ENCODE measurements at regions of chr2 and their contacts with region 1.

Region 1: DNA sequence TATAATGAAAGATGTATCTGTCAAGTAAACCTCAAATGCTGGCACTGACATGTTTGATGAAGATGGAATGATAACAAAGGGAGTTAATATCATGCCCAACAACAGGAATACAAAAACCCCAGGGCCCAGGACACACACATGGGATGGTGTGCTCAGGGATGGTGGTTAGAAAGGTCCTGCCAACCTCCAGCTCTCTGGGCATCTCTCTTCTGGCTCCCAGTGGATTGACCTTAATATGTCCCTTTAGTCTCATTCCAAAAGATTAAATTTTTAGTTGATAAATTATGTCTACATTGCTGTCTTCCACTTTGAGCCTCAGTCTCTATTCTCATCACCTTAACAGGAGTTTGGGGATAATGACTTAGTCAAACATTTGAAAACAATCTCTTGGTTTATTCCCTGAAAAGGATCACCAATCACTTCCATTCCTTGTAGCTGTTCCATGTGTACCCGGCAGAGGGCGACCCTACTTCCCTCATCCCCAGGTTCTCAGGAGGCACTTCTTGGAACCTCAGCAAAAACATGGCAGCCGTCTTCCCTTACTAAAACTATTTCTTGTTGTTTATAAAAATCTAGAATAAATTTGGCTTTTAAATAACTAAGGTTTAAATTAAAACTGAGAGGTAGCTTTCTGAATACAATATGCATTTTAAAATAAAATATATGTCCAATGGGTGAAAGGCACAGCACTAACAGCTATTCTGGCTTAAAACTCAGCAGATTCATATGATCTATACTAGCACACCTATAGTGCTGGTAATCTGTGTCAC is 29.6 kb downstream of the MCEE start:
- DNase-seq: peak; percentile 68 to 74
- H3K4me3 ChIP-seq: no peak overlapping the region
- H3K4me3 Mint-ChIP-seq: no peak overlapping the region
- H3K27ac Mint-ChIP-seq: no peak overlapping the region
- H3K4me1 ChIP-seq: peaks cover 4% of the 10 kb centered on the region
- H3K4me1 Mint-ChIP-seq: peaks cover 6% of the 10 kb centered on the region
- H3K27me3 ChIP-seq: no peaks in the 10 kb centered on the region
- H3K27me3 Mint-ChIP-seq: peaks cover 6% of the 10 kb centered on the region
- CTCF ChIP-seq: peak; percentile 84

Region 2: GRCh38 chr2:71130113-71130904 is 29.9 kb after region 1 on chr2 and contains the starts of genes MCEE and MPHOSPH10:
- CTCF ChIA-PET with region 1: interaction called, 7 read pairs
- POLR2A ChIA-PET with region 1: interaction called, 3 read pairs
- intact Hi-C with region 1: loop called (anchors 1 kb)
- DNase-seq: peak; percentile 93
- H3K4me3 ChIP-seq: peak within 1 kb of the TSS; percentile 73
- H3K4me3 Mint-ChIP-seq: no peak within 1 kb of the TSS
- H3K27ac Mint-ChIP-seq: no peak within 1 kb of the TSS
- H3K4me1 ChIP-seq: 0 out of 2 replicates have a peak, but pooled peaks cover 4% of the 10 kb centered on the region
- H3K4me1 Mint-ChIP-seq: no peaks in the 10 kb centered on the region
- H3K27me3 ChIP-seq: no peaks in the 10 kb centered on the region
- H3K27me3 Mint-ChIP-seq: no peaks in the 10 kb centered on the region
- CTCF ChIP-seq: no peak
- total RNA-seq, gene MCEE: 13.7 and 15.6 TPM in 2 replicates
- total RNA-seq, gene MPHOSPH10: 53.2 and 57.8 TPM in 2 replicates

Region 3: DNA sequence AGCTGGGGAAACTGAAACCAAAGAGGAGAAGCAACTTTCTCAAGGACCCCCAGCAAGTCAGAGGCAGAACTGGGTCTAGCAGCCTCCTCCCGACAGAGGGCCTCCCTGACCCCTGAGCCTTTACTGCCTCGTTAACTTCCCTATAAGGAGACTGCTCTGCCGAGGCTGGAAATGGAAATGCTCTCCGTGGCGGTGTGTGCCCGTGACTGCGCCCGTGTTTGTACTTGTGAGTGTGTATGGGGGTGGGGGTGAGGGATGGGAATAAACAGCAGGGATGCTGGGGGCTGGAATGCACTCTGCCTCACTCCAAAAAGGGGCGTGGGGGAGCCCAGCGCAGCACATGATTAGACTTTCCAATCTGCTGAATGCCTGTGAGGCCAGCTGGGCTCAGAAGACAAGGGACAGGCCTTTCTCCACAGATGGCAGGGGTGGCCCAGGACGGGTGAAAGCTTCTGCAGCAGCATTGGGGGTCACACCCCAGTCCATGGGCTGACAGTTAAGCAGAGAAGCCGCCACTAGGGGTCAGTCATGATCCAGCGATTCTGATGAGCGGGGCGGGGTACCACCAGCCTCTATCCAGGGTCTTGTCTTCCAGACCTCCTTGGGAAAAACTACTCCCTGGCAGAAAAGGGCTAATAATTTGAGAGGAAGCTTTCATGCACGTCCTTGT is 56.9 kb after region 1 on chr2:
- CTCF ChIA-PET with region 1: interaction called, 20 read pairs
- POLR2A ChIA-PET with region 1: no interaction called
- intact Hi-C with region 1: loop called (anchors 1 kb)
- DNase-seq: peak; percentile 62 to 77
- H3K4me3 ChIP-seq: no peak overlapping the region
- H3K4me3 Mint-ChIP-seq: no peak overlapping the region
- H3K27ac Mint-ChIP-seq: no peak overlapping the region
- H3K4me1 ChIP-seq: peaks cover 10% of the 10 kb centered on the region; the same call in 1 of the 2 replicates
- H3K4me1 Mint-ChIP-seq: peaks cover 15% of the 10 kb centered on the region
- H3K27me3 ChIP-seq: no peaks in the 10 kb centered on the region
- H3K27me3 Mint-ChIP-seq: peaks cover 3% of the 10 kb centered on the region
- CTCF ChIP-seq: peak; percentile 77 to 80

Region 4: DNA sequence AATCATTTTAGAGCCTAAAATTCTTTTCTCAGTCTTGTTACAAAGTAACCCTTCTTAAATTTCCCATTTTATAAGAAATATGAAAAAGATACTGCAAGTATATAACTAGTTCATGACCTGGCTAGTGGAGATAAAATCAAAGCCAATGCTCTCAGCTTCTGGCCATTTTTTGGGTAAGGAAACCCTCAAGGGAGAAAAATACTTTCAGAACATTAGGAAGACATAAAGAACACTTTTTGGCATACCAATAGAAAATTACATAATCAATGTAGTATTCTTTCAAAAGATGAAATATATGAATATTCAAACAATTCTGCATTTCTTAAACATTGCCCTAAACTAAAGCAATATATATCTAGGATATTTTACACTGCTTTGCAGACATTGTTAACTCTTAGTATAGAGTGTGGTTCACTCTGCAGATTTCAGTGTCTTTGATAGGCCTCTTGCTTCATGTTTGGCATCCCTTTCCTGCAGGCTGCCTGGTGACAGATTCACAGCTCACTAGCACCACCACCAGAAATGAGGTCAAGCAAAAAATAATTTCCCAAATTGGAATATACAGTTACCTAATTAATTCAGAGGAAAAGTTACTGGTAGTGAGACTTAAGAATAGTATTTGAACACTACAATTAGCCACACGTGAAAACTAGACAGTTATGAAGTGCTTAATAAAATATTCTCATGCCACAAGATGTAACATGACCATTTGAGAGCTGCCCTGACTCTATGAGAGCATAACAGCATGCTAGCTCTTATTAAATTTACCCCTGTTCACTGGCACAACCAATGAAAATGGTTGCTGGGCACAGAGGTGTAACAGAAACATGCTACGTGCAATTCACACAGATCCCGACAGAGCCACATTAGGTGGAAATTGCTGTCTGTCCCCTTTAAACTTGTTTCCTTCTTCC is 90.5 kb after region 1 on chr2:
- CTCF ChIA-PET with region 1: interaction called, 7 read pairs
- POLR2A ChIA-PET with region 1: no interaction called
- intact Hi-C with region 1: loop called (anchors 1 kb)
- DNase-seq: peak in 1 of 2 experiments; percentile 37
- H3K4me3 ChIP-seq: no peak overlapping the region
- H3K4me3 Mint-ChIP-seq: no peak overlapping the region
- H3K27ac Mint-ChIP-seq: no peak overlapping the region
- H3K4me1 ChIP-seq: no peaks in the 10 kb centered on the region
- H3K4me1 Mint-ChIP-seq: no peaks in the 10 kb centered on the region
- H3K27me3 ChIP-seq: no peaks in the 10 kb centered on the region
- H3K27me3 Mint-ChIP-seq: no peaks in the 10 kb centered on the region
- CTCF ChIP-seq: peak; percentile 25 to 44

Measured in Caco-2 (cell line).